ENCODE measurements at regions of chr11 and their contacts with region 1.

Region 1: DNA sequence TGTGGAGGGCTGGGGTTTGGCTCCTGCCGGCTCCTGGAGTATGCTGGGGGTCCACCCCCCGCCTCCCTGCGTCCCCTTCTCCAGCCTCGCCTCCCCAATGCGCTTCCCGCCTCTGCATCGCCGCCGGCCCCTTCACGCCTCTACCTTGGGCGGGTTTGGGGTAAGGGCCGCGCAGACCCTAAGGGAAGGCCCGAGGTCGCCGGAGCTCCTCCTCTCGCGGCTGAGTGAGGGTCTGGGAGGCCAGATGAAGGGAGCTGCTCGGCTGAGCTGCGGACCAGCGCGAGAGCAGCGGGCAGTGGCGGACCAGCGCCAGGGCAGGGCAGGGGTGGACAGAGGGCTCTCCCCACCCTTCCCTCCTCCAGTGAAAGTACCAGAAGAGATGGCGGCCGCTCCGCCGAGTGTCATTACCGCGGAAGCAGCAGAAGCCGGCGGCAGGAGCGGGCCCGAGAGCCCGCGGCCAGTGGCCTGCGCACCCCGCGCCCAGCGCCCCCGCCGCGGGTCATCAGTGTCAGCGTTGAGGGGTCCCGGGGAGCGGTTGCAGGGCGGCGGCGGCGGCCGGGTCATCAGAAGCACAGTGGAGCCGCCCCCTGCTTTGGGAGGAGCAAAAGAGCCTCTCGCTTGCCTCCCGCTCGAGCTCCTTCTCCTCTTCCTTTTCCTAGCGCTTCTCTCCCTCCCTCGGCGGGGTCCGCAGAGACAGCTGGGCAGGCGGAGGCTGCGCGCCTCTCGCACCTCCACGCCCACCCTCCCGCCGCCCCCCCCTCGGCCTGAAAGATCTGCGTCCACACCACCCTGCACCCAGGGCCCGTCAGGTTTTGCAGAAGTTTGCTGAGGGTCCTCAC is 255.6 kb upstream of the CADM1 start:
- DNase-seq: no peak
- H3K4me3 ChIP-seq: peak overlapping the region; percentile 53 to 92 (median 68)
- H3K27ac ChIP-seq: peak overlapping the region; percentile 53 to 81 (median 64)
- H3K4me1 ChIP-seq: peaks cover 25 to 42% (median 30%) of the 10 kb centered on the region in 3 donors
- H3K27me3 ChIP-seq: peaks cover 0 to 9% (median 0%) of the 10 kb centered on the region in 4 donors
- CTCF ChIP-seq: no peak
- POLR2A ChIP-seq: no peak

Region 2: DNA sequence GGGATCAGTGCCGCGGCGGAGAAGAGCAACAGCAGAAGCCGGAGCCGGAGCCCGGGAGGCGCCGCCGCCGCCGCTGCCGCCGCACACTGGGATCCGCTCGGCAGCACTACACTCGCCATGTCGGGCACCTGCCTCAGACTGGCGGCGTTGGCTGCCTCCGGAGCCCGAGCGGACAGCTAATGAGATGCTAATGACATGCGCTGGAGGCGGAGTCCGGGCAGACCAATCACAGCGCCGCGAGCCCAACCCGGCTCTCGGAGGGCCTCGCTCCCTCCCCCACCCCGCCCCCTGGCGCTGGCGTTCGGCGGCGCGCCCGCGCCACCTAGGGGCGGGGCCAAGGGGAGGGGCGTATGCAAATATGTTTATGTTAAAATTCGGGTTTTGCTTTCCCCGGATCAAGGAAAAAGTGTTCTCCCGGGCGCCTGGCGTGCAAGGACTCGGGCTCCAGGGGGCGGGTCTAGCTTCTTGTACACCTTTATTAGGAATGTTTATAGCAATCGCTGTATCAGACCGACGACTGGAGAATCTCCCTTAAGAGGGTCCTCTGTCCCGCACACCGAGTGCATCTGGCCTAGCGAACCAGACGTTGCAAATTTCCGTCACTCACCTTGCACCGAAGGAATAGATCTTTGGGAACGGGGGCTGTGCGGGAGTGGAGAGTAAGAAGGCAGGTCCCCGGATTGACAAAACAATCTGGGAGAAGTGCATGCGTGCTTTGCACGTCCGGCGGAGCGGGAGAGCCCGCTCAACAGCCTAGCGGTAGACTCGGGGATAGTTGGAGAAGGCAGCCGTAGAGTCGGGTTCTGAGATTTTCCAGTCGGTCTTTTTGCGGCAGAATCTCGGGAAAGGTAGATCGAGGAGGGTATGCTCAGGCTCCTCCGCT is 255.3 kb before region 1 on chr11 and contains the start of gene CADM1:
- intact Hi-C with region 1: loop called (anchors 10 kb)
- DNase-seq: peak; percentile 38
- H3K4me3 ChIP-seq: peak within 1 kb of the TSS; percentile 58 to 76 (median 70)
- H3K27ac ChIP-seq: peak within 1 kb of the TSS; percentile 57 to 87 (median 85)
- H3K4me1 ChIP-seq: peaks cover 9 to 47% (median 10%) of the 10 kb centered on the region in 3 donors
- H3K27me3 ChIP-seq: peaks cover 0 to 58% (median 0%) of the 10 kb centered on the region in 4 donors
- CTCF ChIP-seq: peak; percentile 12 to 83 (median 65)
- POLR2A ChIP-seq: peak in 3 of 4 donors; percentile 77 to 87 (median 79)
- total RNA-seq, gene CADM1: 1.7 to 15.1 (median 8.3) TPM

Region 3: GRCh38 chr11:115699733-115700132 is 60.1 kb before region 1 on chr11:
- intact Hi-C with region 1: no loop called
- DNase-seq: no peak
- H3K4me3 ChIP-seq: no peak overlapping the region
- H3K27ac ChIP-seq: peak overlapping the region in 3 of 4 donors; percentile 45 to 58 (median 46)
- H3K4me1 ChIP-seq: peaks cover 0 to 18% (median 15%) of the 10 kb centered on the region in 3 donors
- H3K27me3 ChIP-seq: no peaks in the 10 kb centered on the region
- CTCF ChIP-seq: no peak
- POLR2A ChIP-seq: no peak

Region 4: GRCh38 chr11:115885535-115886421 is 125.9 kb after region 1 on chr11:
- intact Hi-C with region 1: no loop called
- DNase-seq: no peak
- H3K4me3 ChIP-seq: no peak overlapping the region
- H3K27ac ChIP-seq: no peak overlapping the region
- H3K4me1 ChIP-seq: peaks cover 0 to 16% (median 0%) of the 10 kb centered on the region in 3 donors
- H3K27me3 ChIP-seq: peaks cover 0 to 7% (median 0%) of the 10 kb centered on the region in 4 donors
- CTCF ChIP-seq: no peak
- POLR2A ChIP-seq: no peak

Region 5: DNA sequence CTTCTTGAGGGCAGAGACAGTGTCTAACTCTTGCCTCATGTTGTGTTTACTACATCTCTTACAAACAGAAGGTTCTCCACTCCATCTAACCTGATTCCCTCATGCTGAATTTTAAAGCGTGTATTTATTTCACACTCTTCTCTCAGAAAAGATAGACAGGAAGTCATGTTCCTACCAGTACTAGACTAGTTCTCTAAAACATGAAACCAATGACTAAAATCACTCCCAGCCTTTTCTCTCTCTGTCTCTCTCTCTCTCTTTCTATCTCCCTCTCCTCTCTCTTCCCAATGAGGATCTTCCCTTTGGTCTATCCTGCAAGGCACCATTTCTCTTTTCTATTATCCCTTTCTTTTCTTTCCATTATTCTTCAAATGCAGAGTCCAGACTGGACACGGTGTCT is 136.2 kb after region 1 on chr11:
- intact Hi-C with region 1: no loop called
- DNase-seq: no peak
- H3K4me3 ChIP-seq: no peak overlapping the region
- H3K27ac ChIP-seq: no peak overlapping the region
- H3K4me1 ChIP-seq: no peaks in the 10 kb centered on the region
- H3K27me3 ChIP-seq: no peaks in the 10 kb centered on the region
- CTCF ChIP-seq: no peak
- POLR2A ChIP-seq: no peak

Region 6: DNA sequence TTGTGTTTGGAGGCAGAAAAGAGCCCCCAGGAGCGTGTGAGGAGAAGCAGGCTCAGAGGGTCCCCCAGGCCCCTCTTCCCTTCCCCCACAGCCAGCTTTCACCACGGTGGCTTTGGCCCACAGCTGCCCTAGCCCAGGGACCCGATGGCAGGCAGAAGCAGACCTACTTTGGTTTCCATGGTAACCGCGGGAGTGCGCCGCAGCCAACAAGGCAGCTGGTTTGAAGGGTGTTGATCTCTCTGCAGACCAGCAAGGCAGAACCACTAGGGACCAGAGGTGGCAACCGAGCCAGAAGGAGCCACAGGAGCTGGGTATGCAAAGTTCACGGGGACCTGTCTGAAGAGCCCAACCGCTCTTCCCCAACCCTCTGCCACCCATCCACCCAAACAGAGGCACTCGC is 943.6 kb after region 1 on chr11:
- intact Hi-C with region 1: no loop called
- DNase-seq: no peak
- H3K4me3 ChIP-seq: no peak overlapping the region
- H3K27ac ChIP-seq: no peak overlapping the region
- H3K4me1 ChIP-seq: peaks cover 3 to 22% (median 4%) of the 10 kb centered on the region in 3 donors
- H3K27me3 ChIP-seq: peaks cover 0 to 79% (median 0%) of the 10 kb centered on the region in 4 donors
- CTCF ChIP-seq: no peak
- POLR2A ChIP-seq: no peak